ENCODE measurements at regions of chr1 and their contacts with region 1.

Region 1: GRCh38 chr1:16644193-16644481 is 22.6 kb downstream of the RNU1-3 start:
- DNase-seq: no peak
- H3K4me3 ChIP-seq: peak overlapping the region; percentile 64 to 69
- H3K27ac ChIP-seq: peak overlapping the region; percentile 73
- H3K4me1 ChIP-seq: peaks cover 12 to 22% of the 10 kb centered on the region in 2 donors
- H3K27me3 ChIP-seq: no peaks in the 10 kb centered on the region
- CTCF ChIP-seq: no peak

Region 2: DNA sequence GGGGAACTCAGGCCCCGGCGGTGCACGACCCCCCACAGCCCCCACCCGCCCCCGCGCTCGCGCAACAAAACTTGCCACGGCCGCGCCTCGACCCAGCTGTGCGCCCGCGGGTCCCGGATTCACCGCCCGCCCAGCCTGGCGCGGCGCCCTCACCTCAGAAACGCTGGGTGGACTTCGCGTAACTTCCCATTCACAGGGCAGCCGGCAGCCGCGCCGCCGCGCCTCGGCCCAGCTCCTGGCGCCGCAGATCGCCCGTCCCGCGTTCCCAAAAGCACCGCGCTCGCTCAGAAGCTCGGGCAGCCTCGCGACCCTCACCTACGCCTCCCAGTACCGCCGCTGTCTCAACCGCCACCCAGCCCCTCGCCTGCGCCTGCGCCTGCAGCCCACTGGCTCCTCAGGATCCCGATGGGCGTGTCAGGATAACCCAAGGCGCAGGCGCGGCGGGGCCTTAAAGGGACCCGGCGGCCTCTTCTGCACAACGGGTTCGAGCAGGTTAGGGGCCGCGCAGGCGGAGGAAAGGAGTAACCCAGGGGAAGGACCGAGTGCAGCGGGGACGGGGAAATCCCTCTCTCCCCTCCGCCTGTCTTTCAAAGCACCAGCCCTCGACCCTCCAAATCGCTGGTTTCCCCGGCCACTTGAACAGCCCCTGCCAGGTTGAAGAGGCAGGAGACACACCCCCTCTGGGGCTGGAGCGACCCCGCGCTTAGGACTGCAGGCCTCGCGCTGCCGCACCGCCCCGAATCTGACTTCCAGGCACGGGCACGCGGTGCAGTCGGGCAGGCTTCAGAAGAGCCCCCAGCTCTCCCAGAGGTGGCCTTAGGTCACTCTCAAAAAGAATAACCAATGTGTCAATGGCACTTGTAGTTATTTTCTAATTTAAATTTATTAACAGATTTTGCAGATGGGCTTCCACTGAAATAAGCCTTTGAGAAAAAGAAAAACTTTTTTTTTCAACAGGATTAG is 30.7 kb before region 1 on chr1 and contains the start of gene NBPF1:
- intact Hi-C with region 1: loop called (anchors 1 kb)
- DNase-seq: peak; percentile 89 to 100
- H3K4me3 ChIP-seq: peak within 1 kb of the TSS; percentile 64 to 75
- H3K27ac ChIP-seq: peak within 1 kb of the TSS; percentile 54 to 79
- H3K4me1 ChIP-seq: peaks cover 3 to 18% of the 10 kb centered on the region in 2 donors
- H3K27me3 ChIP-seq: no peaks in the 10 kb centered on the region
- CTCF ChIP-seq: no peak
- total RNA-seq, gene NBPF1: 9.2 TPM

Region 3: DNA sequence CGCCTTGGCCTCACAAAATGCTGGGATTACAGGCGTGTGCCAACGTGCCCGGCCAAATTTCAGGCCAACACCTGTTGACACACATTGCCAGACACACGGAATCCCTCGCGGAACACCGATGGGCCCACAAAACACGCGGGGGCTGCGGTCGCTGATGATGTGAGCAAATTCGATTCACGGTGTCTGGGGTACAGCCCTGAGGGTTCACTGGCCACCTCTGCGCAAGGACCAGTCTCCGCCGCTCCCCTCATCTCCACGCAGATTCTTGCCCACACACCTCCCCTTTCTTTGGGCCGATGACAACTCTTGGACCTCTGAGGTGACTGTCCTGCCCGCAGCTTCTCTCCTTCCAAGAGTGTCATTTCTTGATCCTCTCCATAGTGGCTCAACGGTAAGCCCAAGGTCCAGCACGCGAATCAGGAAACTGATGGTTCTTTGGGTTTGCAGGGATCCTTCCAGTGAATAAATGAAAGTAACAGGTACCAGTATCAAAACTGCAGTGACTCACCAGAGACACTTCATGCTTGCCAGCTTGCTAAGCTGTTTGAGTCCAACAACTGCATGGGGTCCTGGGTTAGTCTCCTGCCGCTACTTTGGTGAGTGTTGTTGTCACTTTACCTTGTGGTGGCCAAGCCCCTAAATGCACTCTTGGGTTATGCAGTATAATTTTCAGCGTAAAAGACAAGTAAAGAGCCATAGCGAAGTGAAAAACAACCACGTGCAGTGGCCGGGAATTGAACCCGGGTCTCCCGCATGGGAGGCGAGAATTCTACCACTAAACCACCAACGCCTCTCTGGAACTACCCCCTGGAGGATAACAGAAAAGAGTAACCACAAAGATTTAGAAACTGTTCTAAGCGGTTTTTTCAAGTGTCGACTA is 33.7 kb after region 1 on chr1:
- intact Hi-C with region 1: no loop called
- DNase-seq: no peak
- H3K4me3 ChIP-seq: no peak overlapping the region
- H3K27ac ChIP-seq: no peak overlapping the region
- H3K4me1 ChIP-seq: no peaks in the 10 kb centered on the region
- H3K27me3 ChIP-seq: no peaks in the 10 kb centered on the region
- CTCF ChIP-seq: no peak

Measured in ascending aorta (tissue), 2 donors.